HepG2 (cell line): ENCODE measurements at regions of chr22 and their contacts with region 1.

Region 1: DNA sequence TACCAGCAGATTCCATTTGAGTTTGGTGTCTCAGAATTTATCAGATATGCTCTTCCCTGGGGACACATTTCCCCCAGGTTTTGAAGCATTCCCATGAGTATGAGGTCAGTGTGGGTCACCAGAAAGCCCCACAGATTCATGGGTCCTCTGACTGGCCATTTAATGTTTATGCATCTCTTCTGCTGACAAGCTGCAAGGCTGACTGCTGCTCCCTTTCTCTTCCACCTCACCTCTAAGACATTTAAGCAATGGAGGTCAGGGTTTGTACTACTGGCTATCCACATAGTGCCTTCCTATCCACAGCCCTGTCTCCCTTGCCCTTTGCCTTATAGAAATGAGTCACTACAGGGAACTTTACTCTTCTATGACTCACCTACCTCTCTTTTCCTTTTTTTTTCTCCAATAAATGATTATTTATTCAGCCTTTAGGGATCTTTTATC is 106.0 kb upstream of the TIMP3 start:
- DNase-seq: peak; percentile 87
- ATAC-seq: peak; percentile 86
- H3K4me3 ChIP-seq: no peak overlapping the region
- H3K27ac ChIP-seq: peak overlapping the region; percentile 53
- H3K4me1 ChIP-seq: peaks cover 62% of the 10 kb centered on the region
- H3K27me3 ChIP-seq: no peaks in the 10 kb centered on the region
- CTCF ChIP-seq: no peak
- EP300 ChIP-seq: peak in 1 of 2 experiments; percentile 46; a peak in 2 of 4 replicates
- POLR2A ChIP-seq: no peak
- RAD21 ChIP-seq: no peak

Region 2: DNA sequence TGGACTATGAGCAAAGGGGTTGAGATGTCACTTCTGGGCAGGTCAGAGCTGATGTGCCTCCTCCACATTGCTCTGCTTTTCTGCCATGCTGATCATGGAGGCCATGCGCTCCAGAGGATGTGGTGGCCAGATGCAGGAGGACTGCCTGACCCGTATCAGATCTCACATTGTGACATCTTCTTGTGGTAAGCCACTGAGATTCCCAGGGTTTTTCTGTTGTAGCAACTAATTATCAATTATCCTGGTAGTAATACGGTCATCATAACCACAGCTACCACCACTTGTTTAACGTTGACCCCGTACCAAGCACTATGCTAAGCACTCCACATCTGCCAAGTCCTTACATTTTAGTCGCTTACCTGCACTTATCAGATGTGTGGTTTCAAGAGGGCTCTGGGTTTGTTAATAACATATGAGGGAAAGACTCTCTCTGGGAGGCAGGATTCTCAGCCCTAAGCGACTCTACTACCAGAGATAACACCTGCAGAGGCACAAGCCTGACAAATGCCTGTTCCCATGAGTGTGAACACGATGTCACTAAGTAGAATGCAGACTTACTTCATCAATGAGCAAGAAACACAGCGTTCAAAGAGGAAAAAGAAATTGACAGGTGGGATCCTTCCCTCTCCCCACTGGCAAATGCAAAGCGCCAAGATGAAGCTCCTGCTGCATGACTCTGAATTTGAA is 42.5 kb after region 1 on chr22:
- CTCF ChIA-PET with region 1: no interaction called
- POLR2A ChIA-PET with region 1: no interaction called
- in situ Hi-C with region 1: no loop called
- intact Hi-C with region 1: loop called (anchors 5 kb)
- DNase-seq: no peak
- ATAC-seq: no peak
- H3K4me3 ChIP-seq: no peak overlapping the region
- H3K27ac ChIP-seq: no peak overlapping the region
- H3K4me1 ChIP-seq: peaks cover 44% of the 10 kb centered on the region
- H3K27me3 ChIP-seq: no peaks in the 10 kb centered on the region
- CTCF ChIP-seq: no peak
- EP300 ChIP-seq: no peak
- POLR2A ChIP-seq: no peak
- RAD21 ChIP-seq: no peak